ENCODE measurements at regions of chr7 and their contacts with region 1.

Region 1: DNA sequence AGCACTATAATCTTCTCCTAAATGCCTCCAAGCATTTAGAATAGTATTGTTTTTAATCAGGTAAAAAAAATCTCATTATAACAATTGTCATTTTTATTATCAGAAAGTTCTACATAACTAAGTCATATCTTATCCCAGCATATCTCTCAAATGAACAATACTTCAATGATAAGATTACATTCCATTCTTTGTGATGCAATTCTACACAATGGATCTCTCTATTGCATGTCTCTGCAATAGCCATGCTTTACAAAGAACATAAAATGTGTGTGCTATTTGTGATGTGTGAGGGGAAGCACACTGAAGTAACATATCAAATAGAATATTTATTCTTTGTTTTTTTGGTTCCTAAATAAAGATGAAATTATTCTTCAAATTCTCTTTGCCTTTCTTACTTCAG is 195.7 kb downstream of the TSPAN12 start:
- DNase-seq: no peak
- H3K4me3 ChIP-seq: no peak overlapping the region
- H3K27ac ChIP-seq: no peak overlapping the region
- H3K4me1 ChIP-seq: no peaks in the 10 kb centered on the region
- H3K27me3 ChIP-seq: no peaks in the 10 kb centered on the region
- CTCF ChIP-seq: no peak

Region 2: DNA sequence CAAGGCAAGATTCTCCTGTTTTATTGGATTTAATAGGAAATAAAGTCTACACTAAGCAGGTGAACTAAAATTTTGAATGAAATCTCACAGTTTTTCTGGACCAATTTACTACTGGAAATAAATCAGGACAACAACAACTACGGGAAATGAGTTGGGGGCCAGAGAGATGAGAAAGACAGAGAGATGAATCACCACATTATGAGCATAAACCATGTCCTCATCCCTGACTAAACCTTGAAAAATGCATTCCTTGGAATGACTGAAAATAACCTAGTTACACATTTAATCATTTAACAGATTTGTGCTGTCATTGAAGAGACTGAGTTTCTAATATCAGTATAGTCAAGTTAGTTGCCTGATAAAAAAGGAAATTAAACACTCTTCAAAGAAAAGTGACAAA is 997.7 kb before region 1 on chr7:
- CTCF ChIA-PET with region 1: no interaction called
- POLR2A ChIA-PET with region 1: interaction called, 24 read pairs
- intact Hi-C with region 1: no loop called
- DNase-seq: no peak
- H3K4me3 ChIP-seq: no peak overlapping the region
- H3K27ac ChIP-seq: no peak overlapping the region
- H3K4me1 ChIP-seq: no peaks in the 10 kb centered on the region
- H3K27me3 ChIP-seq: no peaks in the 10 kb centered on the region
- CTCF ChIP-seq: no peak

Region 3: GRCh38 chr7:120628251-120628650 is 34.0 kb before region 1 on chr7:
- CTCF ChIA-PET with region 1: no interaction called
- POLR2A ChIA-PET with region 1: no interaction called
- intact Hi-C with region 1: no loop called
- DNase-seq: no peak
- H3K4me3 ChIP-seq: no peak overlapping the region
- H3K27ac ChIP-seq: no peak overlapping the region
- H3K4me1 ChIP-seq: no peaks in the 10 kb centered on the region
- H3K27me3 ChIP-seq: no peaks in the 10 kb centered on the region
- CTCF ChIP-seq: no peak

Measured in PC-9 (cell line).